Sigmoid colon (tissue), 7 donors: ENCODE measurements at regions of chr2 and their contacts with region 1.

Region 1: DNA sequence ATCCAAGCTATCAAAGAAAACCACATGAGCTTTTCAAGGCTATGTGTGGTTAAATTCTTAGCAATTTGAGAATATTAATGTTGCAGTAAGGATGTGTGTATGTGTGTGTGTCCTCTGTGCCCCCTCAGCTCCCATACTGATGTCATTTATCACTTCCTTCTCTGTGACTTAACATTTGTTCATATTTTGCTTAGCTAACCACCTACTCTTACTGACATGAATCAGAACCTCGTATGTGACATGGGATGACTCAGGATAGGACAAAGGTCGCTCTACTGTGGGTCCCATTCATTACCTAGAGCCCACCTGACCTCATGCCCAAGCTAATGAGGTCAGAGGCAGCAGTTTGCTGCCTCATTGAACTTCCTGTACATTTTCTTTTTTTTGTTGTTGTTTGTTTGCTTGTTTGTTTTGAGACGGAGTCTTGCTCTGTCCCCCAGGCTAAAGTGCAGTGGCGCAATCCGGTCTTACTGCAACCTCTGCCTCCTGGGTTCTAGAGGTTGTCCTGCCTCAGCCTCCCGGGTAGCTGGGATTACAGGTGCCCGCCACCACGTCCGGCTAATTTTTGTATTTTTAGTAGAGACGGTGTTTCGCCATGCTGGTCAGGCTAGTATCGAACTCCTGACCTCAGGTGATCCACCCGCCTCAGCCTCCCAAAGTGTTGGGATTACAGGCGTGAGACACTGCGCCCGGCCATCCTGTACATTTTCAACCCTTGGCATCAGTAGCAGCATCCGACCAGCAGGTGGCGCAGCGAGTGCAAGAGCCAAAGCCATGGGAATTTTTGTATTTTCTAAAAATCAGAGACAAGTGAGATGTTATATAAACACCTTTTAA is 36.4 kb downstream of the MOGAT1 start:
- DNase-seq: peak; percentile 87
- H3K4me3 ChIP-seq: no peak overlapping the region
- H3K27ac ChIP-seq: no peak overlapping the region
- H3K4me1 ChIP-seq: peaks cover 0 to 25% (median 19%) of the 10 kb centered on the region in 4 donors
- H3K27me3 ChIP-seq: no peaks in the 10 kb centered on the region
- CTCF ChIP-seq: peak; percentile 91 to 98 (median 94)
- EP300 ChIP-seq: no peak
- POLR2A ChIP-seq: no peak

Region 2: GRCh38 chr2:222797261-222797660 is 89.4 kb after region 1 on chr2:
- intact Hi-C with region 1: loop called (anchors 5 kb)
- DNase-seq: no peak
- H3K4me3 ChIP-seq: no peak overlapping the region
- H3K27ac ChIP-seq: no peak overlapping the region
- H3K4me1 ChIP-seq: peaks cover 0 to 19% (median 11%) of the 10 kb centered on the region in 4 donors
- H3K27me3 ChIP-seq: no peaks in the 10 kb centered on the region
- CTCF ChIP-seq: peak in 2 of 4 experiments; percentile 45 to 49
- EP300 ChIP-seq: no peak
- POLR2A ChIP-seq: no peak